Sigmoid colon (tissue), 7 donors: ENCODE measurements at regions of chr17 and their contacts with region 1.

Region 1: GRCh38 chr17:34637548-34638525 is 58.5 kb downstream of the TMEM132E start:
- DNase-seq: peak; percentile 82
- H3K4me3 ChIP-seq: peak overlapping the region; percentile 20 to 51 (median 40)
- H3K27ac ChIP-seq: no peak overlapping the region
- H3K4me1 ChIP-seq: peaks cover 0 to 12% (median 9%) of the 10 kb centered on the region in 4 donors
- H3K27me3 ChIP-seq: peaks cover 12 to 70% (median 17%) of the 10 kb centered on the region in 3 donors
- CTCF ChIP-seq: peak; percentile 73 to 89 (median 82)
- EP300 ChIP-seq: no peak
- POLR2A ChIP-seq: no peak

Region 2: GRCh38 chr17:34420254-34420766 is 217.5 kb before region 1 on chr17:
- intact Hi-C with region 1: loop called (anchors 1 kb)
- DNase-seq: peak; percentile 73
- H3K4me3 ChIP-seq: no peak overlapping the region
- H3K27ac ChIP-seq: no peak overlapping the region
- H3K4me1 ChIP-seq: peaks cover 0 to 15% (median 5%) of the 10 kb centered on the region in 4 donors
- H3K27me3 ChIP-seq: peaks cover 10 to 67% (median 38%) of the 10 kb centered on the region in 3 donors
- CTCF ChIP-seq: peak; percentile 38 to 95 (median 84)
- EP300 ChIP-seq: no peak
- POLR2A ChIP-seq: no peak

Region 3: GRCh38 chr17:34542700-34543336 is 95.0 kb before region 1 on chr17:
- intact Hi-C with region 1: loop called (anchors 1 kb)
- DNase-seq: no peak
- H3K4me3 ChIP-seq: no peak overlapping the region
- H3K27ac ChIP-seq: no peak overlapping the region
- H3K4me1 ChIP-seq: no peaks in the 10 kb centered on the region
- H3K27me3 ChIP-seq: peaks cover 0 to 14% (median 9%) of the 10 kb centered on the region in 3 donors
- CTCF ChIP-seq: peak; percentile 41 to 83 (median 71)
- EP300 ChIP-seq: no peak
- POLR2A ChIP-seq: no peak

Region 4: GRCh38 chr17:34562387-34562786 is 75.5 kb before region 1 on chr17:
- intact Hi-C with region 1: no loop called
- DNase-seq: no peak
- H3K4me3 ChIP-seq: no peak overlapping the region
- H3K27ac ChIP-seq: no peak overlapping the region
- H3K4me1 ChIP-seq: no peaks in the 10 kb centered on the region
- H3K27me3 ChIP-seq: peaks cover 0 to 30% (median 0%) of the 10 kb centered on the region in 3 donors
- CTCF ChIP-seq: no peak
- EP300 ChIP-seq: no peak
- POLR2A ChIP-seq: no peak